Thyroid gland (tissue), 4 donors: ENCODE measurements at regions of chr1 and their contacts with region 1.

Region 1: DNA sequence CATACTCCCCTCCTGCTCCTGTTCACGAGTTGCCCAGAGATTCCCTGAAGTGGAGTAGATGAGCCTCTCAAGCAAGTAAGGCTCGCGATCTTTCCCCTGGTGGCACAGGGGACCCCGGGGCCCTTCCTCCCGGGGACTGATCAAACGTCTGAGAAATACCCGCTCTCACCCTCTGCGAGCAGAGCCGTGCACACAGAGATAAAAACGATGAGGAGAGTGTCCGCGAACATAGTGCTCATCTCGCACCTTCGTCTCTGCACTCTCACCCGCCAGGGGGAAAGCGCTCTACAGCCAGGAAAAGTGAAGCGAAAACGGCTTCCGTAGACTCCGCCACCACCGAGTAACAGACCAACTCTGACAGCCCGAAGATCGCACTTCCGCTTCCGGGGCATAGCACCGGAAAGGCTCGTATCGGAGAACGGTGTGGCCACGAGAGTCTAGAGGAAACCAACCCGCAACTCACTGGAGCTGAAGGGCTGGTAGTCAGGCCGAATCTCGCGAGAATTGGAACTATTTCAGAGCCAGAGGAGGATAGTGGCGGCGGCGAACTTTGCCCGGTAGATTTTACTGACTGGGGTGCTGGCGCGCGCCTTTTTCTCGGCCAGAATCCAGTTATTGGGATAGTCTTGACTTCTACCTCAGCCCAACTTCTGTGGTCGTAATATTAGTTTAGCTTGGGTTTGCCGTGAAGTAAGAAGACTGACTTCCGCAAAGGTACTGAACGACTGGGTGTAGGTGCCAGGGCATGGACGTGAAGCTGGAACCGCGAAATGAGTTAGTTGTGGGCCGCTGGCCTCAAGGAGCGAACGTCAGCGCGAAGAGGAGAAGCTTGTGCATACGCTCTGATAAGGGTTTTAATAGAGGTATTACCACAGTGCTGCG is at the start of gene TMCO1:
- DNase-seq: peak; percentile 97
- H3K4me3 ChIP-seq: peak within 1 kb of the TSS; percentile 82 to 98 (median 84)
- H3K27ac ChIP-seq: peak within 1 kb of the TSS; percentile 75 to 92 (median 87)
- H3K4me1 ChIP-seq: peaks cover 19 to 20% of the 10 kb centered on the region in 2 donors
- H3K27me3 ChIP-seq: no peaks in the 10 kb centered on the region
- CTCF ChIP-seq: no peak
- POLR2A ChIP-seq: peak in 1 of 2 donors; percentile 76
- total RNA-seq, gene TMCO1: 94.5 to 114 (median 103) TPM

Region 2: GRCh38 chr1:165600793-165601192 is 168.0 kb before region 1 on chr1:
- intact Hi-C with region 1: loop called (anchors 10 kb)
- DNase-seq: peak; percentile 9 to 43
- H3K4me3 ChIP-seq: no peak overlapping the region
- H3K27ac ChIP-seq: no peak overlapping the region
- H3K4me1 ChIP-seq: peaks cover 9 to 11% of the 10 kb centered on the region in 2 donors
- H3K27me3 ChIP-seq: no peaks in the 10 kb centered on the region
- CTCF ChIP-seq: no peak
- POLR2A ChIP-seq: no peak

Region 3: GRCh38 chr1:165659581-165659895 is 109.2 kb before region 1 on chr1:
- intact Hi-C with region 1: no loop called
- DNase-seq: no peak
- H3K4me3 ChIP-seq: no peak overlapping the region
- H3K27ac ChIP-seq: peak overlapping the region in 1 of 3 donors; percentile 50
- H3K4me1 ChIP-seq: peaks cover 0 to 7% of the 10 kb centered on the region in 2 donors
- H3K27me3 ChIP-seq: no peaks in the 10 kb centered on the region
- CTCF ChIP-seq: no peak
- POLR2A ChIP-seq: no peak

Region 4: GRCh38 chr1:165717918-165718515 is 50.7 kb before region 1 on chr1:
- intact Hi-C with region 1: loop called (anchors 10 kb)
- DNase-seq: peak; percentile 52 to 56
- H3K4me3 ChIP-seq: no peak overlapping the region
- H3K27ac ChIP-seq: no peak overlapping the region
- H3K4me1 ChIP-seq: no peaks in the 10 kb centered on the region
- H3K27me3 ChIP-seq: no peaks in the 10 kb centered on the region
- CTCF ChIP-seq: peak in 5 of 6 experiments; percentile 28 to 76 (median 62)
- POLR2A ChIP-seq: no peak

Region 5: DNA sequence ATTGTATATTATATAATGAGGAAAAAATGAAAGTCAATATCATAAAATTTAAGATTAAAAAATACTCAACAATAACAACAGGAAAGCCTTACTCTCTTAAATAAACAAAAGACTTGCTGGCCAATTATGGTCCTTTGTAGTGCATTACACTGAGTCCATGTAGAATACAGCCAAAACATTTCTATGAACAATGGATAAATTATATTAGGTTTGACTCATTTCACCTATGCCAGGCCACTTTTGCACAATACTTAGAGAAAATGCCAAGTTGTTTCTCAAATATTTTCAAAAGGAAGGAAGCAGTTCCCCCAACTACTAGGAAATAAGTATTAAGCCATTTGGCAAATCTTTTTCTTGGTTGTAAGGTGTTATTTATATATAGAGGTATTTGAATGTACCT is 38.9 kb after region 1 on chr1:
- intact Hi-C with region 1: no loop called
- DNase-seq: no peak
- H3K4me3 ChIP-seq: no peak overlapping the region
- H3K27ac ChIP-seq: no peak overlapping the region
- H3K4me1 ChIP-seq: no peaks in the 10 kb centered on the region
- H3K27me3 ChIP-seq: no peaks in the 10 kb centered on the region
- CTCF ChIP-seq: no peak
- POLR2A ChIP-seq: no peak